ENCODE measurements at regions of chr1 and their contacts with region 1.

Region 1: GRCh38 chr1:94237291-94238226 is at the start of gene ARHGAP29:
- DNase-seq: no peak
- H3K4me3 ChIP-seq: peak within 1 kb of the TSS; percentile 70 to 77
- H3K27ac ChIP-seq: peak within 1 kb of the TSS; percentile 85
- H3K4me1 ChIP-seq: peaks cover 22% of the 10 kb centered on the region
- H3K27me3 ChIP-seq: no peaks in the 10 kb centered on the region
- CTCF ChIP-seq: no peak
- POLR2A ChIP-seq: peak; percentile 55 to 77
- total RNA-seq, gene ARHGAP29: 27.3 TPM

Region 2: GRCh38 chr1:94061513-94062443 is 175.8 kb before region 1 on chr1:
- intact Hi-C with region 1: loop called (anchors 5 kb)
- DNase-seq: no peak
- H3K4me3 ChIP-seq: no peak overlapping the region
- H3K27ac ChIP-seq: peak overlapping the region; percentile 62
- H3K4me1 ChIP-seq: peaks cover 29% of the 10 kb centered on the region
- H3K27me3 ChIP-seq: no peaks in the 10 kb centered on the region
- CTCF ChIP-seq: peak; percentile 81 to 82 (median 82)
- POLR2A ChIP-seq: no peak

Region 3: DNA sequence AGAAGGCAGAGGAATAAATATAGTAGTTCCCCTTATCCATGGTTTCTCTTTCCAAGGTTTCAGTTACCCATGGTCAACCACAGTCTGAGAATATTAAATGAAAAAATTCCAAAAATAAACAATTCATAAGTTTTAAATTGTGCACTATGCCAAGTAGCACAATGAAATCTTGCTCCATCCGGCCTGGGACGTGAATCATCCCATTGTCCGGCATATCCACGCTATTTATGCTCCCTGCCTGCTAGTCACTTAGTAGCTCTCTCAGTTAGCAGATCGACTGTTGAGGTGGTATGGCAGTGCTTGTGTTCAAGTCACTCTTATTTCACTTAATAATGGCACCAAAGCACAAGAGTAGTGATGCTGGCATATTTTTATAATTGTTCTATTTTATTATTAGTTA is 58.5 kb after region 1 on chr1:
- intact Hi-C with region 1: no loop called
- DNase-seq: no peak
- H3K4me3 ChIP-seq: no peak overlapping the region
- H3K27ac ChIP-seq: no peak overlapping the region
- H3K4me1 ChIP-seq: peaks cover 22% of the 10 kb centered on the region
- H3K27me3 ChIP-seq: no peaks in the 10 kb centered on the region
- CTCF ChIP-seq: no peak
- POLR2A ChIP-seq: no peak

Region 4: GRCh38 chr1:94329986-94330385 is 92.4 kb after region 1 on chr1:
- intact Hi-C with region 1: loop called (anchors 5 kb)
- DNase-seq: no peak
- H3K4me3 ChIP-seq: no peak overlapping the region
- H3K27ac ChIP-seq: no peak overlapping the region
- H3K4me1 ChIP-seq: peaks cover 32% of the 10 kb centered on the region
- H3K27me3 ChIP-seq: no peaks in the 10 kb centered on the region
- CTCF ChIP-seq: no peak
- POLR2A ChIP-seq: no peak